Natural killer cell (primary cell): ENCODE measurements at regions of chr10 and their contacts with region 1.

Region 1: GRCh38 chr10:101095542-101096213 is 33.9 kb downstream of the KAZALD1 start:
- DNase-seq: peak; percentile 66 to 84
- ATAC-seq: peak; percentile 77 to 98 (median 96)
- H3K4me3 ChIP-seq: no peak overlapping the region
- H3K4me3 Mint-ChIP-seq: no peak overlapping the region
- H3K27ac ChIP-seq: no peak overlapping the region
- H3K27ac Mint-ChIP-seq: no peak overlapping the region
- H3K4me1 ChIP-seq: no peaks in the 10 kb centered on the region
- H3K4me1 Mint-ChIP-seq: peaks cover 0 to 4% of the 10 kb centered on the region in 2 donors
- H3K27me3 ChIP-seq: no peaks in the 10 kb centered on the region
- H3K27me3 Mint-ChIP-seq: peaks cover 43 to 48% of the 10 kb centered on the region in 2 donors
- CTCF ChIP-seq: peak; percentile 82

Region 2: DNA sequence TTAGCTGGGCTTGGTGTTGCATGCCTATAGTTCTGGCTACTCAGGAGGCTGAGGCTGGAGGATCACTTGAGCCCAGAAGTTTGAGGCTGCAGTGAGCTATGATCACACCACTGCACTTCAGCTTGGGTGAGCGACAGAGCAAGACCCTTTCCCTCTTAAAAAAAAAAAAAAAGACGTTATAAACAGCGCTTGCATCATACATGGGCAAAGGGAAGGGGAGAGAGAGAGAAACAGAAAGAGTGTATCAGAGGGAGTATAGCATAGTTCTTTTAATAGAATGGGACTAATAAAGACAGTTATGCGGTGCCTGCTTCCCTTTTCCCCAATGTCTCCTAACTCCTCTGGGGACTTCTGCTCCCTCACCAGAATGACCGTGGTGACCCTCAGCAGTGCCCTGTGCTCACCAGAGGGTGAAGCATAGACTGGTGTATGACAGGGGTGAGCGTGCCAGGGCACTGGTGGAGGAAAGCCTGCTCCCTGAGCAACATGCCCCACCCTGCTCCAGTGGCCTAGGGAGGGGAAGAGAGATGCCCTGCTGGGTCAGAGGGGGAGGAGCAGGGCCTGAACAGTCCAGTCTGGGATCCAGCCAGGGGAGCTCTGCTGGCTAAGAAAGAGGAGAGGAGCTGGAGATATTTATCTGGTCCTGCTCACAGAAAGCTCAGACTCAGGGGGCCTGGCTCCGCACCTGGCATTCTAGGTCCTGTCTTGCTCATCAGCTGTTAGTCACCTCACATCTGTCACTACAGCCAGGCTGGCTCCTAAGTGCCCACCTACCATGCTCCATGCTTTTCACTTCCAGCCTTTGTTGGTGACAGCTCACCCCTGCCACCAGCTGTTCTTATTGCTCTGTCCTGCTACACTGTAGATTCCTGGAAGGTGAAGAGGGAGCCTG is 67.0 kb before region 1 on chr10:
- intact Hi-C with region 1: no loop called
- DNase-seq: no peak
- ATAC-seq: no peak
- H3K4me3 ChIP-seq: no peak overlapping the region
- H3K4me3 Mint-ChIP-seq: no peak overlapping the region
- H3K27ac ChIP-seq: no peak overlapping the region
- H3K27ac Mint-ChIP-seq: no peak overlapping the region
- H3K4me1 ChIP-seq: peaks cover 28% of the 10 kb centered on the region
- H3K4me1 Mint-ChIP-seq: peaks cover 26 to 27% of the 10 kb centered on the region in 2 donors
- H3K27me3 ChIP-seq: no peaks in the 10 kb centered on the region
- H3K27me3 Mint-ChIP-seq: peaks cover 0 to 7% of the 10 kb centered on the region in 2 donors
- CTCF ChIP-seq: no peak

Region 3: GRCh38 chr10:101141616-101142532 is 46.2 kb after region 1 on chr10:
- intact Hi-C with region 1: loop called (anchors 1 kb)
- DNase-seq: peak; percentile 74 to 88
- ATAC-seq: peak; percentile 84 to 95 (median 94)
- H3K4me3 ChIP-seq: no peak overlapping the region
- H3K4me3 Mint-ChIP-seq: no peak overlapping the region
- H3K27ac ChIP-seq: no peak overlapping the region
- H3K27ac Mint-ChIP-seq: no peak overlapping the region
- H3K4me1 ChIP-seq: peaks cover 19% of the 10 kb centered on the region
- H3K4me1 Mint-ChIP-seq: peaks cover 0 to 5% of the 10 kb centered on the region in 2 donors
- H3K27me3 ChIP-seq: peaks cover 64% of the 10 kb centered on the region
- H3K27me3 Mint-ChIP-seq: peaks cover 59 to 76% of the 10 kb centered on the region in 2 donors
- CTCF ChIP-seq: peak; percentile 95

Region 4: DNA sequence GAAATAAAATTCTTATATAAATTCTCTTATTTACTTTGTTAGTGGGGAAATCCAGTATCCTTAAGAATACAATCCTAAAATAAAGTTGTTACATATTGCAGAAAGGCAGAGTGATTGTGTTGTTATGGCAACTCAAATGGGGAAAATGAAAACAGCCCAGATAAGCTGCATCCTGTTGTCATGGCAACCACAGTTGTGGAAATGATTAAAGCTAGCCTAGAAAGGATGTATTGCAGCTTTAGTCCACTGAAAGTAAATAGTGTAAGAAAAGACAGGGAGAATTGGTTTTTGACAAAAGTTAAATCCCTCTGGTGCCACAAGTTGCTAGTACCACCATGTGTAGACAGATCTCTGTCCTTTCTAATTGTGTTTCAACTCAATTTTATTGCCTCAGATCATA is 301.5 kb after region 1 on chr10:
- intact Hi-C with region 1: no loop called
- DNase-seq: peak in 1 of 2 donors; percentile 82
- ATAC-seq: peak in 2 of 3 donors; percentile 69 to 79
- H3K4me3 ChIP-seq: no peak overlapping the region
- H3K4me3 Mint-ChIP-seq: no peak overlapping the region
- H3K27ac ChIP-seq: no peak overlapping the region
- H3K27ac Mint-ChIP-seq: peak overlapping the region in 1 of 2 donors; percentile 61
- H3K4me1 ChIP-seq: no peaks in the 10 kb centered on the region
- H3K4me1 Mint-ChIP-seq: peaks cover 15 to 21% of the 10 kb centered on the region in 2 donors
- H3K27me3 ChIP-seq: no peaks in the 10 kb centered on the region
- H3K27me3 Mint-ChIP-seq: no peaks in the 10 kb centered on the region
- CTCF ChIP-seq: no peak